ENCODE measurements at regions of chr11 and their contacts with region 1.

Region 1: DNA sequence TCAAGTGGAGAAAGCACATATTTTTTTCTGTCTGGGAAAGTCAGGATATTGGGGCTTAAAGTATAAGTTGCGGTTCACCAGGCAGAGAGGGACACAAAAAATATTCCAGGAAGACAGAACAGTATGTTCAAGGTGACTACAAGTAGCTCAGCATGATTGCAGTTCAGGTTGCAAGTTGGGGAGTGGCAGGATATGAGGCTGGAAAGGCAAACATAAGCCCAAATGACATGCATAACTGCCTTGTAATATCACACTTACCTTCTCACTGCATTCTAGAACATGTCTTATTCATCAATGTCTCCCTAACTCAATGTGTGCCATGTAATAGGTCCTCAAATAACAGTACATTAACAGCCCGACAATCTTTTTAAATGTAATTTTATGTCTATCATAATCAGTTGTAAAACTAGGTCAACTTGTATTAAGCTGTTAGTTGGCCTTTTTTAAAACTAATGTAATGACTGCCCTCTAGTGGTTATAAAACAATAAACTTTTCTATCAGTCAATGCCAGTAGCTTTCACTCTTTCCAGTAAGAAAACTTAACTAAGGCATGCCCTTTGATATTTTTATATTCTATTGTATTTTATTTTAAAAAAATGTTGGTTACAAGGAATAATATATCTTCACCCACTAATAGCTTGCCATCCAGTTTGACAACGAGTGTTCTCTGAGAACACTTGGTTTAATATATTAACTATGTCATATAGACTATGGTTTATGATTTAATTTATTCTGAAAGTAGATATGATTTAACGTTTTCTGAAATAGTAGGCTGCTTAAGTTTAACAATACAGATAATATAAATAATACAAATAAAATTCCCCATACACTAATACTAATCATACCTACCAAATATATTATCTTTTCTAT is 39.4 kb upstream of the CFAP300 start:
- DNase-seq: peak; percentile 37 to 72
- ATAC-seq: peak; percentile 92

Region 2: DNA sequence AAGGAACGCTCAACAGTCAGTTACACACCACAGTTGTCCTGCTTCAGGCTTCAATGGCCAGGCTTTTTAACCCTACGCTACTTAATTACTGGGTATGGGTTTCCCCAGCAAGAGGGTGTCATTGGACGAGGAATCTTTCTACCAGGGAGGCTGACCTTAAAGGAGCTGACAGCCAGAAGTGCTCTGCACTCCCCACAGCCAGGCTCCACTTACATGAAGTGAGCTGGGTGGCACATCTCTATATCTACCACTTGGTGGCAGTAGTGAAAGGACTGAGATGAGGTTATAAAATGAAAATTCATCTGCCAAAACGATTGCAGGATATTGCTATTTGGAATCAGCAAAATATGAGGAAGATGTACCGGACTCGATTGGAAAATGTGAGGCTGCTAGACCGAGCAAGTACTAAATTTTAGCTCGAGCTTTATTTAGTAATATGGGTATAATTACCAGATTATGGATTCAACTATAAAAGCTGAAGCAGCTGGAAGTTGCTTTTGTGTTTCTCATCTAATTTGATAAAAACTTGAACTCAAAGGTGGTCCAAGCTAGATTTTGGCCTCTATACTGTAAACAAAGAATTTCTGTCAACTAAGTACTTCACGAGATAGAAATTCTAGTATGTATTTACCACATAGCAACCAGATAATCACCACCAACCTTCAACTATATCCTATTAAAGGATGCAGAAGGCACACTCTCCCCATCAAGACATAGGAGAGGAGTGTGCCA is 146.9 kb before region 1 on chr11:
- intact Hi-C with region 1: loop called in 1 of 2 experiments (anchors 5 kb)
- DNase-seq: peak in 1 of 2 donors; percentile 14
- ATAC-seq: peak; percentile 89

Region 3: DNA sequence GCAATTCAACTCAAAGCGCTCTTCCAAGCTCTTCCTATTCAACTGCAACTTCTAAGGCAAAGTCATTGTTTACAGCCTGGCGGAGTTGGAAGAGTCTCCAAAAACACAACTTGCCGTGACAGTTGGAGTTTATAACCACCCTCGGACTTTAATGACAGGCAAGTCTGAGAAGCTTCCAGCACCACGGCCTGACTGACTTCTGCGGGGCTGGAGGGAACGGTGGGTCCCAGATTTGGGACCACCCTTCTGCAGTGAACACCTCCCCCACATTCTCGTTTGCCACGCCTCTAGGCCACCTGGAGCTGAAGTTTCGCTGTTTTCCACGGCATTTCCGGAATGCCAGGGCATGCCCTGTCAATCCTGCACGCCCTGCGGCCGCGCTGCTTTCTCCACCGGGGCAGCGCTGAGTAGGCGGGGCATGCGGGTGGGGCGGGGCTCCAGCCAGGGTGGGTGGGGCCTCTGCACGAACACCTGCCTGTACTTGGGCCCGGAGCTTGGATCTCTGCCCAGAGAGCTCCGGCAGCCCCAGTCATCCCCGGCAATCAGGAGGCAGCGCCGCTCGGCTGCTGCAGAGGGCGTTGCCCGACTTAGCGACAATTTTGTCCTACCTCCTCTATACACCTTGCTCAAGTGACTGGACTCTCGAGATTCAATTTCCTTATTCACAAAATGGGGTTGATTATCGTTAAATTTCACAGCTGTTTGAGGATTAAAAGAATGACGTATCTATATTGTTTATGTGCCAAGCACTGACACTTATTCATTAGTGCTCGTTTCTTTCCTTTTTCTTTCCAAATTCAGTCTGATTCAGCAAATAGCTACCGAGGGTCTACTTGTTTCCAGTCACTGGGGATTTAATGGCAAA is 260.8 kb after region 1 on chr11:
- intact Hi-C with region 1: no loop called
- DNase-seq: peak; percentile 93 to 94
- ATAC-seq: peak; percentile 91

Measured in left colon (tissue), 2 donors.